WTC11 (cell line): ENCODE measurements at regions of chr20 and their contacts with region 1.

Region 1: DNA sequence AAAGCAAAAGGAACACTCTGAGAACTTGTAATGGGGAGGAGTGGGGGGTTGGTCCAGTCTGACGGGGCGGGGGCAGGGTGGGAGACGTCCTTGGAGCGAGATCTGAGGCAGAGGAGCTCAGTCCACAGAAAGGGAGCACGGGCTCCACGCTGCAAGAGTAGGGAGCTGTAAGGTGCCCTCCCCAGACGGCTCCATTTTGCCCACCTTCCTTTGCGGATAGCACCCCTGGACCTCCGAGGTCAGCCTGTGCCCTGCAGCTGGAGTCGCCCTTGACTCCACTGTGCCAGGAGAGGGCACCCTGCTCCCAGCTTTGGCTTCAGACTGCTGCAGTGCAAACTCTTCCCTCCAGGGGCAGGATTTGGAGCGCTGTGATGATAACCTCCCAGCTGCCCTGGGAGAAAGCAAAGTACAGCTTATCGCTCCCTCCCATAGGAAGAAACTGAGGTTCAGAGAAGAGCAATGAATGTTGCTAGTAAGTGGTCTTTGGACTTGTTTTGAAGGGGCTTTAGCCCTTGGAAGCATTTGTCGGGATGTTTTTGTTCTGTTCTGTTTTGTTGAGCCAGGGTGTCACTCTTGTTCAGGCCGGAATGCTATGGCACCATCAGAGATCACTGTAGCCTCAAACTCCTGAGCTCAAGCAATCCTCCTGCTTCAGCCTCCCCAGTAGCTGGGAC is 9.5 kb upstream of the AHCY start:
- DNase-seq: peak; percentile 95
- ATAC-seq: peak; percentile 90
- H3K4me3 Mint-ChIP-seq: peak overlapping the region; percentile 81
- H3K27ac Mint-ChIP-seq: no peak overlapping the region
- H3K4me1 Mint-ChIP-seq: peaks cover 7% of the 10 kb centered on the region; the same call in 1 of the 2 replicates
- H3K27me3 Mint-ChIP-seq: peaks cover 16% of the 10 kb centered on the region
- CTCF ChIP-seq: peak; percentile 93

Region 2: GRCh38 chr20:33954504-33954903 is 358.2 kb before region 1 on chr20:
- CTCF ChIA-PET with region 1: no interaction called
- POLR2A ChIA-PET with region 1: no interaction called
- DNase-seq: no peak
- ATAC-seq: no peak
- H3K4me3 Mint-ChIP-seq: no peak overlapping the region
- H3K27ac Mint-ChIP-seq: no peak overlapping the region
- H3K4me1 Mint-ChIP-seq: no peaks in the 10 kb centered on the region
- H3K27me3 Mint-ChIP-seq: no peaks in the 10 kb centered on the region; the same call in 1 of the 2 replicates
- CTCF ChIP-seq: no peak

Region 3: DNA sequence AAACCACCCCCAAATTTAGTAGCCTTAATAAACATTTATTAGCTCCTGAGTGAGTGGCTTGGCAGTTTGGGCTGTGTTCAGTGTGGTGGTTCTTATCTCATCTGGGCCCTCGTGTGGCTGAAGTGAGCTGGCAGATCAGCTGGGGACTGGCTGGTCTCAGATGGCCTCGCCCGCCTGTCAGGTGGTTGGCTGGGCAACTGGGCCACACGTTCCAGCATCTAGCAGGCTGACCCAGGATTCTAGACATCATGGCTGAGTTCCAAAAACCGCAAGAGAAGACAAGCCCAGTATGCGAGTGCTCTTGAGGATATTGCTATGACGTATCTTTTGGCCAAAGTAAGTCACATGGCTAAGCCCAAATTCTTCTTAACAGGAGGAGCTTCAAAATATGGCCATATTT is 229.5 kb before region 1 on chr20:
- CTCF ChIA-PET with region 1: no interaction called
- POLR2A ChIA-PET with region 1: no interaction called
- DNase-seq: no peak
- ATAC-seq: no peak
- H3K4me3 Mint-ChIP-seq: no peak overlapping the region
- H3K27ac Mint-ChIP-seq: no peak overlapping the region
- H3K4me1 Mint-ChIP-seq: no peaks in the 10 kb centered on the region
- H3K27me3 Mint-ChIP-seq: no peaks in the 10 kb centered on the region
- CTCF ChIP-seq: no peak

Region 4: DNA sequence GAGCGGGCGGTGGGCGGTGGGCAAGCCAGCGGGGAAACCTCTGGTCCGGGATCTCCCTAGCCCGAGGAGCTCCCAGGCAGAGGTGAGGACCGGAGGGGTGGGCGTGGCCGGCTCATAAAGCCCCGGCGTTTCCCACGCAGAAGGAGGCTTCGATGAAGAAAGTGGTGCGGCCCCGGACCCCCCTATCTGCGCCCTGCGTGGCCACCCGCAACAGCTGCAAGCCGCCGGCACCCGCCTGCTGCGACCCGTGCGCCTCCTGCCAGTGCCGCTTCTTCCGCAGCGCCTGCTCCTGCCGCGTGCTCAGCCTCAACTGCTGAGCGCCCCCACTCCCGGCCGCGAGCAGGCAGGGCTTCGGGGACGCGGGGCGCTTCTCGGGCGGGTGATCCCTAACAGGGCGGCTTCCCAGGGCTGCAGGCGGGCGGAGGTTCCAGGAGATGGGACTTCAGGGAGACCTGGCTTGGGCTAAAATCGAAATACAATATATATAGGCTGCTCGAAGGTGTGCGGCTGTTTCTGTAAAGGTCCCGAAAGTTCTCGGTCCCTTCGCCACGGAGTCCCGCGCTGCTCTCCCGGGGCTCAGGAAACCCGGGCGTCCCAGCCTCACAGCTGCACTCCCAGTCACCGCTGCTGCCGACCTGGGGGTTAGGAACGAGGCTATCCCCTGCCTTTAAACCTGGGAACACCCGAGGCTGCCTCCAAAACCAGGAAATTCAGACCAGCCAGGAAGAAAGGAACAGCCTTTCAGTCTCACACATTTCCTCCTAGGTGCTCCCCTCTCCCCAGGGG is 43.6 kb before region 1 on chr20:
- CTCF ChIA-PET with region 1: interaction called, 13 read pairs
- POLR2A ChIA-PET with region 1: no interaction called
- DNase-seq: peak; percentile 63
- ATAC-seq: peak; percentile 65
- H3K4me3 Mint-ChIP-seq: peak overlapping the region; percentile 64
- H3K27ac Mint-ChIP-seq: no peak overlapping the region
- H3K4me1 Mint-ChIP-seq: peaks cover 3% of the 10 kb centered on the region; the same call in 1 of the 2 replicates
- H3K27me3 Mint-ChIP-seq: peaks cover 7% of the 10 kb centered on the region
- CTCF ChIP-seq: no peak

Region 5: GRCh38 chr20:34363062-34363464 is 50.4 kb after region 1 on chr20 and contains the start of gene ITCH:
- CTCF ChIA-PET with region 1: interaction called, 90 read pairs
- POLR2A ChIA-PET with region 1: interaction called, 18 read pairs
- DNase-seq: peak; percentile 97
- ATAC-seq: peak; percentile 98
- H3K4me3 Mint-ChIP-seq: peak within 1 kb of the TSS; percentile 96
- H3K27ac Mint-ChIP-seq: peak within 1 kb of the TSS; percentile 99
- H3K4me1 Mint-ChIP-seq: peaks cover 26% of the 10 kb centered on the region
- H3K27me3 Mint-ChIP-seq: no peaks in the 10 kb centered on the region; the same call in 1 of the 2 replicates
- CTCF ChIP-seq: no peak
- total RNA-seq, gene ITCH: 35.8 to 43.4 TPM (median 36.4 TPM) in 3 replicates

Region 6: DNA sequence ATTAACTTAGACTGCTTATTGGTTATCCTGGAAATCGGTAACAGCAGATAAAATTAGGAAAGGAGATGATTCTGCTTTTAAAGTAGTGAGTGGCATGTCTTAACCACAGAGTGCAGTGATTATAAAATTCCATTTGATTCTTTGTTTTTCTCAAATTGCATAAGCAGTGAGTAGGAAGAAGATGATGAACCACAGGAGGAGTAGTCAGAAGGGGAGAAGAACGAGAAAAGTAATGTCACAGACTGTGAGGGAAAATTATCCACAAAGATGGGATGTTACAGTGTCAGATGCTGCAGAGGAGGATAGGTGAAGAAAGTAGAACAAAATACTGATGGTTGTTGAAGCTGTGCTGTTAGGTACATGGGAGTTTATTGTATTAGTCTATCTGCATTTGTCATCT is 113.3 kb after region 1 on chr20:
- CTCF ChIA-PET with region 1: interaction called, 18 read pairs
- POLR2A ChIA-PET with region 1: no interaction called
- DNase-seq: no peak
- ATAC-seq: no peak
- H3K4me3 Mint-ChIP-seq: no peak overlapping the region
- H3K27ac Mint-ChIP-seq: no peak overlapping the region
- H3K4me1 Mint-ChIP-seq: no peaks in the 10 kb centered on the region
- H3K27me3 Mint-ChIP-seq: no peaks in the 10 kb centered on the region
- CTCF ChIP-seq: no peak

Region 7: GRCh38 chr20:34452281-34452982 is 139.8 kb after region 1 on chr20:
- CTCF ChIA-PET with region 1: interaction called, 12 read pairs
- POLR2A ChIA-PET with region 1: no interaction called
- DNase-seq: no peak
- ATAC-seq: no peak
- H3K4me3 Mint-ChIP-seq: no peak overlapping the region
- H3K27ac Mint-ChIP-seq: no peak overlapping the region
- H3K4me1 Mint-ChIP-seq: no peaks in the 10 kb centered on the region
- H3K27me3 Mint-ChIP-seq: no peaks in the 10 kb centered on the region
- CTCF ChIP-seq: no peak

Region 8: DNA sequence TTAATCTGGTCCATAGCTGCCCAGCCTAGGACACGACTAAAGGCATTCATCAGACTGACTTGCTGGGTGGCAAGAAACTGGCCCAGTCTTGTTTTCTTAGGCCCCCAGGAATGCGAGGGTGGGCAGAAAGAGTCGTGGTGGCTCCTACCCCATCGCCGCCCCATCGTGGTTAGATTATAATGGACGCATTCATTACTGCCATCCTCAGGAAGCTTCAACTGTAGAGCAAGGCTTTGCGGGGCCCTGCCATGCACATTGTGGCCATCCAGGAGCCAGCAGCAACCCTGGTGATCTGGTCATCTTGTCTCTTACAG is 219.7 kb after region 1 on chr20:
- CTCF ChIA-PET with region 1: interaction called, 12 read pairs
- POLR2A ChIA-PET with region 1: no interaction called
- DNase-seq: no peak
- ATAC-seq: no peak
- H3K4me3 Mint-ChIP-seq: no peak overlapping the region
- H3K27ac Mint-ChIP-seq: no peak overlapping the region
- H3K4me1 Mint-ChIP-seq: no peaks in the 10 kb centered on the region
- H3K27me3 Mint-ChIP-seq: no peaks in the 10 kb centered on the region
- CTCF ChIP-seq: no peak